Stomach (tissue), 19 donors: ENCODE measurements at regions of chr6 and their contacts with region 1.

Region 1: GRCh38 chr6:149431905-149432775 is 32.1 kb downstream of the SUMO4 start:
- DNase-seq: peak; percentile 94
- H3K4me3 ChIP-seq: no peak overlapping the region
- H3K27ac ChIP-seq: no peak overlapping the region
- H3K4me1 ChIP-seq: peaks cover 0 to 9% (median 4%) of the 10 kb centered on the region in 4 donors
- H3K27me3 ChIP-seq: no peaks in the 10 kb centered on the region
- CTCF ChIP-seq: peak in 6 of 7 experiments; percentile 47 to 96 (median 90)
- EP300 ChIP-seq: no peak
- POLR2A ChIP-seq: no peak

Region 2: GRCh38 chr6:149028767-149029405 is 403.3 kb before region 1 on chr6:
- intact Hi-C with region 1: loop called (anchors 5 kb)
- DNase-seq: peak; percentile 58 to 95
- H3K4me3 ChIP-seq: no peak overlapping the region
- H3K27ac ChIP-seq: no peak overlapping the region
- H3K4me1 ChIP-seq: peaks cover 0 to 29% (median 10%) of the 10 kb centered on the region in 4 donors
- H3K27me3 ChIP-seq: no peaks in the 10 kb centered on the region
- CTCF ChIP-seq: peak in 4 of 7 experiments; percentile 67 to 80 (median 70)
- EP300 ChIP-seq: no peak
- POLR2A ChIP-seq: no peak

Region 3: DNA sequence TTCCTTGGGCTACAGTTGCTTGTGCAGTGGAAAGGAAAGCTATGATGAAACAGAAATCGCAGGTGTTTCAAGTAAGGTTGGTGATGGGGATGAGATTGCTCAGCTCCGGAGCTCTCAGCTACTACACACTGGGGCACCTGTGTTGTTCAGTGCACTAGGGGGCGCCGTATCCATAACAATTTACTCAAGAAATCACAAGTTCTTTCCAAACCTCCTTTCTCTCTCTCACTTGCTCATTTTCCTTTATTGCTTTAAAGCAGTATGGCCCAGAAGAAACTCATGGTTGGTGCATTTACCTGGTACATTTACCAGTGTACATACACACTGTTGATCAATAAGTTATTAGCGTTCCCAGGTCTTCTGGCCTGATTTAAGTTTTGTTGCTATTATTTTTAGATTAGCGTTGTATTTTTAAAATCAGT is 349.8 kb before region 1 on chr6:
- intact Hi-C with region 1: loop called (anchors 5 kb)
- DNase-seq: peak; percentile 86 to 93
- H3K4me3 ChIP-seq: no peak overlapping the region
- H3K27ac ChIP-seq: no peak overlapping the region
- H3K4me1 ChIP-seq: peaks cover 0 to 32% (median 17%) of the 10 kb centered on the region in 4 donors
- H3K27me3 ChIP-seq: no peaks in the 10 kb centered on the region
- CTCF ChIP-seq: peak in 5 of 7 experiments; percentile 73 to 82 (median 78)
- EP300 ChIP-seq: no peak
- POLR2A ChIP-seq: no peak

Region 4: DNA sequence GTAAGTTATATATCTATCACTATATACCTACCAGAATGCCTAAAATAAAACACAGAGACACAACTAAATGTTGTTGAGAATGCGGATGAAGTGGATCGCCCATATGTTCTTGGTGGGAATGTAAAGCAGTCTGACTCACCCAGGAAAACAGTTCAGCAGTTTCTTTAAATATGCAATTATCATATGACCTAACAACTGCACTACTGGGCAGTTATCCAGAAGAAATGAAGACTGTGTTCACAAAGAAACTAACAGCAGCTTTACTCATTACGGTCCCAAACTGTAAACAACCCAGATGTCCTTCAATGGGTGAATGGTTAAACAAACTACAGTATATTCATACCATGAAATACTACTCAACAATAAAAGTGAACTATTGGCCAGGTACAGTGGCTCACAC is 66.9 kb after region 1 on chr6:
- intact Hi-C with region 1: no loop called
- DNase-seq: peak in 1 of 2 donors; percentile 61
- H3K4me3 ChIP-seq: no peak overlapping the region
- H3K27ac ChIP-seq: peak overlapping the region in 2 of 5 donors; percentile 0 to 20
- H3K4me1 ChIP-seq: peaks cover 0 to 10% (median 2%) of the 10 kb centered on the region in 4 donors
- H3K27me3 ChIP-seq: no peaks in the 10 kb centered on the region
- CTCF ChIP-seq: no peak
- EP300 ChIP-seq: no peak
- POLR2A ChIP-seq: no peak